Right ventricle myocardium inferior (tissue), 1 donor: ENCODE measurements at regions of chr1 and their contacts with region 1.

Region 1: GRCh38 chr1:208988811-208989222 is 594.7 kb upstream of the CAMK1G start:
- DNase-seq: no peak
- ATAC-seq: no peak

Region 2: GRCh38 chr1:208942394-208943130 is 46.3 kb before region 1 on chr1:
- intact Hi-C with region 1: loop called (anchors 5 kb)
- DNase-seq: no peak
- ATAC-seq: no peak

Region 3: GRCh38 chr1:209023790-209024189 is 35.0 kb after region 1 on chr1:
- intact Hi-C with region 1: no loop called
- DNase-seq: no peak
- ATAC-seq: no peak

Region 4: DNA sequence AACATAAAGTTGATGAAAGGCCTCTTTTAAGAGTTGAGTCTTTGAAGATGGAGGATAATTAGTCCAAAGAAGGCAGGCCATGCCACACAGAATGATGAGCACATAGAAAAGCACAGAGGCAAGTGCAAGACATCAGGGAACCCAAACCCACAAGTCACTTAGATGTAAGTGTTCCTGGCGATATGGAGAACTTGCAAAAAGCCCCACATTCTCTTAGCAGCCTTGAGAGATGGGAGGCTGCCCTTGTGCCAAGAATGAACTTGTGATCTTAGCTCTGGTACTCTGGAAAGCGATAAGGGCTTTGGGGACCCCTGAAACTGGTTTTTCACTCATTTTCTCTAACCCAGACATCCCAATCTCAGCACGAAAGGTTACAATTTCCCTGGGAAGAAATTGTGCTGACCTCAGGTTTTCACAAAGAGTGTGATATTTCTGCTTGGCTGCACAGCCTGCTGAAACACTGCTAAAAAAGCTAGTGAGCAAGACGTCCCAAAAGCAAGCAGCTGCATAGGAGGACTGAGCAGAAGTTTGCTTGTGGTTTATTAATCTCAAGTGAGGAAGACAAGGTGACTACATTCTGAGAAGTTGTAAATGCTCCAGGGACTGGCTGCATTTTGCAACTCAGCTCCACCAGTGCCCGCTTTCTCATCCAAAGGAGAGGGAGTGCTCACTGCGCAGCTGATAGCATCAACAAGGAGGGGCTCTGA is 97.8 kb after region 1 on chr1:
- intact Hi-C with region 1: no loop called
- DNase-seq: no peak
- ATAC-seq: no peak